ENCODE measurements at regions of chr12 and their contacts with region 1.

Region 1: DNA sequence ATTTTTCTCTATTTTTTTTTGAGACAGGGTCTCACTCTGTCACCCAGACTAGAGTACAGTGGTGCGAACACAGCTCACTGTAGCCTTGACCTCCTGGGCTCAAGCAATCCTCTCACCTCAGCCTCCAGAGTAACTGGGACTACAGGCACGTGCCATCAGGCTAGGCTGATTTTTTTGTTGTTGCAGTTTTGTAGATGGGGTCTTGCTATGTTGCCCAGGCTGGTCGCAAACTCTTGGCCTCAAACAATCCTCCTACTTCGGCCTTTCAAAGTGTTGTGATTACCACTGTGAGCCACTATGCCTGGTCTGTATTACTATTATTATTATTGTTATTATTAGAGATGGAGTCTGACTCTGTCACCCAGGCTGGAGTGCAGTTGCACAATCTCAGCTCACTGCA is 23.3 kb downstream of the GIT2 start:
- DNase-seq: no peak
- ATAC-seq: no peak
- H3K4me3 Mint-ChIP-seq: no peak overlapping the region
- H3K27ac Mint-ChIP-seq: peak overlapping the region; percentile 92
- H3K4me1 Mint-ChIP-seq: peaks cover 19% of the 10 kb centered on the region
- H3K27me3 Mint-ChIP-seq: no peaks in the 10 kb centered on the region
- CTCF ChIP-seq: no peak

Region 2: GRCh38 chr12:109995686-109996482 is 23.1 kb after region 1 on chr12 and contains the start of gene GIT2:
- CTCF ChIA-PET with region 1: no interaction called
- POLR2A ChIA-PET with region 1: interaction called, 11 read pairs
- intact Hi-C with region 1: loop called (anchors 1 kb)
- DNase-seq: peak; percentile 86
- ATAC-seq: peak; percentile 72
- H3K4me3 Mint-ChIP-seq: peak within 1 kb of the TSS; percentile 96
- H3K27ac Mint-ChIP-seq: peak within 1 kb of the TSS; percentile 95
- H3K4me1 Mint-ChIP-seq: peaks cover 80% of the 10 kb centered on the region
- H3K27me3 Mint-ChIP-seq: no peaks in the 10 kb centered on the region
- CTCF ChIP-seq: no peak
- total RNA-seq, gene GIT2: 89.2 and 107 TPM in 2 replicates